Right cardiac atrium (tissue), 5 donors: ENCODE measurements at regions of chr10 and their contacts with region 1.

Region 1: DNA sequence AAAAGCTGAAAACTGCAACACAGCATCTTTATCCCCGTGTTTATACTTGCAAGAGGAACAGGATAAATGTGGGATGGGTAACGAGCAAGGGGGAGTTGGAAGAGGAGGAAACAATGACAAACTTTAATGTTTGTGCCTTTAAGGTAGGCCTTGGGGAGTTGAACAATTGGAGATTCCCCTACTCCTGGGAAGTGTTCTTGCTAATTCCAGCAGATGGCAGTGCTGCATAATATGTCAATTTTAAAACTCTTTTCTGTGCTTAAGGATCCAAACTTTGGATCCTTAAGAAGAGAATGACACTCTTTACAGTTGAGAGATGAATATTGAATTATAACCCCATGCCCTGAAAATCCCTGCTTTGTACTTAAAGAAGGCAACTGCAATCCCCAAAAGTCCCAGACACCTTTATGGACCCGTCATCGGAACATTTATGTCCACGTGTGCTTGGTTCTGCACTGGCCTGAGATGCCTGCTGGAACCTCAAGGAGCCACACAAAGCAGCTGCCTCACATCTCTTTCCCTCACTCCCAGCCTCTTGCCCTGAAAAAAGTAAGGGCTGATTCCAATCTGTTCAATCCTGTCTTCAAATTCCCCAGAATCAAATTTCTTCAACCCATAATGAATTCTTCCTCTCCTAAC is 12.0 kb downstream of the IFIT5 start:
- DNase-seq: no peak
- ATAC-seq: peak; percentile 49 to 74
- H3K4me3 ChIP-seq: no peak overlapping the region
- H3K27ac ChIP-seq: no peak overlapping the region
- H3K4me1 ChIP-seq: no peaks in the 10 kb centered on the region
- H3K27me3 ChIP-seq: no peaks in the 10 kb centered on the region

Region 2: DNA sequence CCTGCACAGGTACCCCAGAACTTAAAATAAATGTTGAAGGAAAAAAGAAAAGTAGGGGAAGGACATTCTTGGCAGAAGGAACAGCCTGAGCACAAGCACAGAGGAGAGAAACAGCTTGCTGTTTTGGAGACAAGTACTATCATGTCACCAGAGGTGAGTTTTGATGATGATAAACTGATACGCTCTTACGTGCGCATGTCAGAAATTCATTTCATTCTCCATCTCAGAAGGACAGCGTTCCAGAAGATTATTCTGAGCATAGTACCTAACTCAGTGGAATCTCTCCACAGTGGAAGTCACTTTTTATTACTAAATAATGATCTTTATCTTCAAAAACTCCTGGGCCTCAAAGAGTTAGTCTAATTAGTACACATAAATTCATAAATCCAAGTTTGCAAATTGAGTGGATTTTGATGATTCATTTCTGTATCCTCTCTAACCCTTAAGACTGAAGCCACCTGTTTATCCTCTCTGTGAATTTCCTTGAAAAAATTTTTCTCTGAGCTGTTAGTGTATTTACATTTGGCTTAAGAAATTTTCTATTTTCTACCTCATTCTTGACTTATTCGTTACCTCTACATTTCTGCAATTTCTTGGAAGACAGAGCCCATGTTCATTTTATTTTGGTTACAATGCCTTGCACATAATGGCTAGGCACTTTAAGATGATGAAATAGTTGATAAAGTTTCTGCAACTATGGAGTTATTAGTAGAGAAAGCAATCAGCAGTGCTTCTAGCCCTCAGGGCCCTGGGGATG is 287.8 kb before region 1 on chr10:
- intact Hi-C with region 1: no loop called
- DNase-seq: no peak
- ATAC-seq: no peak
- H3K4me3 ChIP-seq: no peak overlapping the region
- H3K27ac ChIP-seq: no peak overlapping the region
- H3K4me1 ChIP-seq: no peaks in the 10 kb centered on the region
- H3K27me3 ChIP-seq: no peaks in the 10 kb centered on the region

Region 3: DNA sequence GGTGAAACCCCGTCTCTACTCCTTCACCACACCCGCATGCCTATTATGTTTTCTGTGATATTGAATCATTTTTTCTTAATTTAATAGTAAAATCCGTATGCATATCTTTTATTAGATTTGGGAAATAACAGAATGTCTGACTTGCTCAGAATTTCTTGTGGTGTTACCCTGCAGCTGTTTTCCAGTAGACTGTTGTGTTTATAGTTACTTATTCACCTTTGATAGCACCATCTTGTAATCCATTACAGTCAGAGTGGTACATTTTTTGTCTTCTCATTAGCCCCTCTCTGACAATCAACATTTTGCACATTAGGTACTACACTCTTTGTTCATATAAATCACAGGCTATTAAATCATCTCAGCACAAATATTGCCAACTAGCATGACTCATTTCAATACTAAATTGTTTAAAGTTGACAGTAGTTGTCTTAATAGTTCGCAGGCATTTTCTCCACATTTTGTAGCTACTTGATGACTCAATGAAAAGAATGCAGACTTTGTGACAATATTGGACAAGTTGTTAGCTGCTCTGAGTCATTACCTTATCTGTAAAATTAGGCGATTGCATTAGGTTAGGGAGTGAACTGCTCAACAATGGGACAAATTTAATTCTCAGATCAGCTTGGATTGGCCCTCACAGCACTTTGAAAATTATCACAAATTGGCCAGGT is 126.8 kb after region 1 on chr10:
- intact Hi-C with region 1: loop called in 2 of 4 experiments (anchors 5 kb)
- DNase-seq: no peak
- ATAC-seq: peak; percentile 63 to 79
- H3K4me3 ChIP-seq: no peak overlapping the region
- H3K27ac ChIP-seq: no peak overlapping the region
- H3K4me1 ChIP-seq: no peaks in the 10 kb centered on the region
- H3K27me3 ChIP-seq: no peaks in the 10 kb centered on the region

Region 4: GRCh38 chr10:89563861-89564478 is 137.6 kb after region 1 on chr10:
- intact Hi-C with region 1: loop called (anchors 2 to 5 kb)
- DNase-seq: no peak
- ATAC-seq: peak in 1 of 2 donors; percentile 62
- H3K4me3 ChIP-seq: no peak overlapping the region
- H3K27ac ChIP-seq: no peak overlapping the region
- H3K4me1 ChIP-seq: no peaks in the 10 kb centered on the region
- H3K27me3 ChIP-seq: no peaks in the 10 kb centered on the region

Region 5: GRCh38 chr10:89643431-89644331 is 217.3 kb after region 1 on chr10:
- intact Hi-C with region 1: no loop called
- DNase-seq: peak; percentile 71 to 87 (median 83)
- ATAC-seq: peak; percentile 95
- H3K4me3 ChIP-seq: peak overlapping the region; percentile 75
- H3K27ac ChIP-seq: peak overlapping the region; percentile 63
- H3K4me1 ChIP-seq: peaks cover 3% of the 10 kb centered on the region
- H3K27me3 ChIP-seq: no peaks in the 10 kb centered on the region